ENCODE measurements at regions of chr14 and their contacts with region 1.

Region 1: DNA sequence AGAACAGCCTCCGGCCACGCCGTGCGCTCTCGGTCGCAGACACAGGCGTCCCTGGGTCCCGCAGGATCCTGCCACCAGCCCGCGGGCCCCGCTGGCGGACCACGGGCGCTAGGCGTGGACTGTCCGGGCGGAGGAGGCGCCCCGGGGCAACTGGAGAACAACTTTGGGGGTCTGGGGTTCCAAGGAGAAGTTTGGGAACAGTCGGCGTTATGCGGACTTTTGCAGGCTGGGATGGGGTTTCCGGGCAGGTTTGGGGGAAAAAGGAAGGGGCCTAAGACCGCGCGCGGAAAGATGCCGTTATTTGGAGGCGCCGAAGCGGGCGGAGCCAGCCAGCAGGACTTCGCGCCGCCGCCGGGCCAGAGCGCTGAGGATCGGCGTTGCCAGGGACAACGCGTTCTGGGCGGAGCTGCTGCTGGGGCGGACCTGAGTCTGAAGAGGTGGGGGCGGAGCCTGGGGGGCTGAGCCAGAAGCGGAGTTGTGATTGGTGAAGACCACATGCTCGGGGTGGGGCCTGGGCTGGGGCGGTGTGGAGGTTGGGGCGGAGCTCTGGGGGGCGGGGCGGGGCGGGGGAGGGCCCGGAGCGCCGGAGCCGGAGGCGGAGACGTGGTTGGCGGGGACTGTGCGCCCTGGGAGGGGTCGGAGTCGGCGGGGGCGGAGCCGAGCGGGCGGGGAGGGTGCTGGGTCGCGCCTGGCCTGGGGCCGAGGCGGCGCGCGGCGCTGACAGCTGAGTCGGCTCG is at the start of gene CYP46A1:
- DNase-seq: peak; percentile 99 to 100 (median 100)
- ATAC-seq: peak; percentile 94
- H3K4me3 ChIP-seq: peak within 1 kb of the TSS; percentile 64
- H3K4me3 Mint-ChIP-seq: peak within 1 kb of the TSS; percentile 95
- H3K27ac ChIP-seq: peak within 1 kb of the TSS; percentile 46 to 50
- H3K27ac Mint-ChIP-seq: peak within 1 kb of the TSS; percentile 55
- H3K4me1 ChIP-seq: peaks cover 31% of the 10 kb centered on the region
- H3K4me1 Mint-ChIP-seq: peaks cover 12% of the 10 kb centered on the region
- H3K27me3 ChIP-seq: peaks cover 9 to 14% of the 10 kb centered on the region in 2 experiments
- H3K27me3 Mint-ChIP-seq: peaks cover 18% of the 10 kb centered on the region
- CTCF ChIP-seq: no peak
- total RNA-seq, gene CYP46A1: 0.11 to 0.22 TPM

Region 2: DNA sequence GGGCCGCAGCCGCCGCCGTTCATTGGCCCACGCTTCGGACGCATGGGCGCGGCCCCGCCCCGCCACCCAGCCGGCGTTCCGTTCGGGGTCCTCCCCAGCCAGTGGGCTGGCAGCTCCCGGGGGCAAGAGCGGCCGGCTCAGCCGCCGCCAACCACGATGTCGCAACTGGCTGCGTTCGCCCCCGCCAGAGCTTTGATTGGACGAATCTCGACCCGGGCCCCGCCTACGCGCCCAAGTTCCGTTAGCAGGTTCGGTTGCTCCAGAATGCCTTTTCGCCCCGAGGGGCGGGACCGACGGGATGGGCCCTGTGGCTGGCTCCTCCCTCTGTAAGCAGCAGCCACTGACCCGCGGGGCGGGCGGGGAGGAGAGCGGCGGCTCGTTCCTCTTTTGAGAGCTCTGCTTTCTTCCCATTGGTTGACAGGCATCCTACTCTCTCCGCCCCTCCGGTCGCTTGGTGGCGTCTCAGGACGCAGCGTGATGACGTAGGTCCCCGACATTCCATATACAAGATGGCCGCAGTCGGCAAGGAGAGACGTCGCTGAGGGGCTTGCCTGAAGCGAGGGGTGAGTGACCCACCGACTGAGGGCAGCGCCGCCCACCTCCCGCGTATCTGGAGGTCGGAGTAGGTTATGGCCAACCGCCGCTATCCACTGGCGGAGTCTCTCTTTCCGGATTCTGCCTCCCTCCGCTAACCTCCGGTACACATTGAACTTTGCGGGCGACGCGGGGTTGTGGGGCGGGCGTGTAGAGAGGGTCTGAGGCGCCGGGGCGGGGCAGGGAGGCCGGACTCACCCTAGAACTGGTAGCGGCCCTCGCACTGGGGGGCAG is 202.7 kb before region 1 on chr14 and contains the start of gene CCNK:
- CTCF ChIA-PET with region 1: interaction called, 4 read pairs
- POLR2A ChIA-PET with region 1: interaction called, 17 read pairs
- intact Hi-C with region 1: loop called in 1 of 2 experiments (anchors 2 kb)
- DNase-seq: peak; percentile 100
- ATAC-seq: peak; percentile 87
- H3K4me3 ChIP-seq: peak within 1 kb of the TSS; percentile 96
- H3K4me3 Mint-ChIP-seq: peak within 1 kb of the TSS; percentile 92
- H3K27ac ChIP-seq: peak within 1 kb of the TSS; percentile 90 to 96
- H3K27ac Mint-ChIP-seq: peak within 1 kb of the TSS; percentile 94
- H3K4me1 ChIP-seq: peaks cover 29% of the 10 kb centered on the region
- H3K4me1 Mint-ChIP-seq: peaks cover 74% of the 10 kb centered on the region
- H3K27me3 ChIP-seq: no peaks in the 10 kb centered on the region
- H3K27me3 Mint-ChIP-seq: no peaks in the 10 kb centered on the region
- CTCF ChIP-seq: no peak
- total RNA-seq, gene CCNK: 140 to 151 TPM

Region 3: GRCh38 chr14:99604283-99604765 is 79.5 kb before region 1 on chr14:
- CTCF ChIA-PET with region 1: interaction called, 4 read pairs
- POLR2A ChIA-PET with region 1: interaction called, 23 read pairs
- intact Hi-C with region 1: loop called in 1 of 2 experiments (anchors 2 kb)
- DNase-seq: peak; percentile 89 to 98 (median 96)
- ATAC-seq: peak; percentile 91
- H3K4me3 ChIP-seq: peak overlapping the region; percentile 88
- H3K4me3 Mint-ChIP-seq: peak overlapping the region; percentile 88
- H3K27ac ChIP-seq: peak overlapping the region; percentile 66 to 77
- H3K27ac Mint-ChIP-seq: peak overlapping the region; percentile 85
- H3K4me1 ChIP-seq: peaks cover 50% of the 10 kb centered on the region
- H3K4me1 Mint-ChIP-seq: peaks cover 47% of the 10 kb centered on the region
- H3K27me3 ChIP-seq: no peaks in the 10 kb centered on the region
- H3K27me3 Mint-ChIP-seq: no peaks in the 10 kb centered on the region
- CTCF ChIP-seq: no peak

Region 4: GRCh38 chr14:99884834-99885648 is 201.3 kb after region 1 on chr14:
- CTCF ChIA-PET with region 1: interaction called, 3 read pairs
- POLR2A ChIA-PET with region 1: no interaction called
- intact Hi-C with region 1: loop called (anchors 1 kb)
- DNase-seq: peak in 5 of 14 experiments; percentile 7 to 74 (median 66)
- ATAC-seq: peak; percentile 80
- H3K4me3 ChIP-seq: no peak overlapping the region
- H3K4me3 Mint-ChIP-seq: no peak overlapping the region
- H3K27ac ChIP-seq: no peak overlapping the region
- H3K27ac Mint-ChIP-seq: no peak overlapping the region
- H3K4me1 ChIP-seq: no peaks in the 10 kb centered on the region
- H3K4me1 Mint-ChIP-seq: no peaks in the 10 kb centered on the region
- H3K27me3 ChIP-seq: peaks cover 2 to 12% of the 10 kb centered on the region in 2 experiments
- H3K27me3 Mint-ChIP-seq: peaks cover 16% of the 10 kb centered on the region
- CTCF ChIP-seq: peak; percentile 85

Region 5: GRCh38 chr14:100213956-100214774 is 530.4 kb after region 1 on chr14:
- CTCF ChIA-PET with region 1: no interaction called
- POLR2A ChIA-PET with region 1: no interaction called
- intact Hi-C with region 1: loop called in 1 of 2 experiments (anchors 10 kb)
- DNase-seq: peak; percentile 83 to 98 (median 92)
- ATAC-seq: peak; percentile 96
- H3K4me3 ChIP-seq: peak overlapping the region; percentile 66
- H3K4me3 Mint-ChIP-seq: peak overlapping the region; percentile 89
- H3K27ac ChIP-seq: peak overlapping the region; percentile 79 to 89
- H3K27ac Mint-ChIP-seq: peak overlapping the region; percentile 91
- H3K4me1 ChIP-seq: peaks cover 32% of the 10 kb centered on the region
- H3K4me1 Mint-ChIP-seq: peaks cover 32% of the 10 kb centered on the region
- H3K27me3 ChIP-seq: no peaks in the 10 kb centered on the region
- H3K27me3 Mint-ChIP-seq: no peaks in the 10 kb centered on the region
- CTCF ChIP-seq: no peak